MCF 10A (cell line): ENCODE measurements at regions of chr1 and their contacts with region 1.

Region 1: DNA sequence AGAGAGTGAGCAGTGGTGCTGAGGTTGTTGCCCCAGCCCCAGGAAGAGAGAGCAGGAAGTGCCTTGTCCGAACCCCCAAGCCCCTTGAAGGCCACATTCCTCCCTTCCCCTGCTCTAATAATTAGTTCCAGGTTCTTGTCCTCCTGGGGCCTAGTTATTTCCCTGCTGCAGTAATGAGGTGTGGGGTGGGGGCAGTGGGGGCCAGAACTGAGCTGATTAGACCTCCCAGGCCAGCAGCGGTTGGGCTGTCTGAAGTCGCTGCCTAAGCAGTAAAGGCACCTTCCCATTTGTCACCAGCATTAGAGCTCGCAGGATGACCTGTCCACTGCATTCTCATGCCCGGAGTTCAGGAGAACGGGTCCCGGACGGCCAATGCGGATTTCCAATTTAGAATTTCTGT is 186.5 kb upstream of the CSF3R start:
- DNase-seq: no peak
- H3K4me3 Mint-ChIP-seq: no peak overlapping the region
- H3K27ac Mint-ChIP-seq: no peak overlapping the region
- H3K4me1 Mint-ChIP-seq: no peaks in the 10 kb centered on the region
- H3K27me3 Mint-ChIP-seq: peaks cover 16% of the 10 kb centered on the region
- CTCF ChIP-seq: no peak

Region 2: DNA sequence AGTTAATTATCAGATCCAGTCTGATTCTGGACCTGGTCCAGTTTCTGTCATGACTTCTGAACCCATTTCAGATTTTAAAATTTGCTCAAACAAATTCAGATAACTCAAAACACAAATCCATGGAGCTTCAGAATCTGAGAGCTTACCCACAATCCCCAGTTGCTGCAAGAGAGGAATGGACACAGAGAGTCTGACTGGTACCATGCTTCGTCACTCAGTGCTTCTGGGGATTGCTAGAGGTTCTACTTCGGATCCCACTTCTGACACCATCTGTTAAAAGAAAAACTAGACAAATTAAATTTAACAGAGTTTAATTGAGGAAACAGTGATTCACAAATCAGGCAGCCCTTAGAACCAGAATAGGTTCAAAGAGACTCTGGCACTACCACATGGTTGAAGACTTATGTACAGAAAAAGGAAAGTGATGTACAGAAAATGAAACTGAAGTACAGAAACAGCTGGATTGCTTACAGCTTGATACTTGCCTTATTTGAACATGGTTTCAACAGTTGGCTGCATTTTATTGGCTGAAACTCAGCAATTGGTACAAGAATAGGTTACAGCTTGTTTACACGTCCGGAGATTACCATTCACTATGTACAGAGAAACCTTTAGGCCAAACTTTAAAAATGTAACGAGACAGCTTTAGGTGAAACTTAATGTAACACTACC is 646.0 kb before region 1 on chr1:
- CTCF ChIA-PET with region 1: no interaction called
- POLR2A ChIA-PET with region 1: no interaction called
- intact Hi-C with region 1: no loop called
- DNase-seq: no peak
- H3K4me3 Mint-ChIP-seq: no peak overlapping the region
- H3K27ac Mint-ChIP-seq: no peak overlapping the region
- H3K4me1 Mint-ChIP-seq: peaks cover 6% of the 10 kb centered on the region
- H3K27me3 Mint-ChIP-seq: no peaks in the 10 kb centered on the region
- CTCF ChIP-seq: no peak

Region 3: DNA sequence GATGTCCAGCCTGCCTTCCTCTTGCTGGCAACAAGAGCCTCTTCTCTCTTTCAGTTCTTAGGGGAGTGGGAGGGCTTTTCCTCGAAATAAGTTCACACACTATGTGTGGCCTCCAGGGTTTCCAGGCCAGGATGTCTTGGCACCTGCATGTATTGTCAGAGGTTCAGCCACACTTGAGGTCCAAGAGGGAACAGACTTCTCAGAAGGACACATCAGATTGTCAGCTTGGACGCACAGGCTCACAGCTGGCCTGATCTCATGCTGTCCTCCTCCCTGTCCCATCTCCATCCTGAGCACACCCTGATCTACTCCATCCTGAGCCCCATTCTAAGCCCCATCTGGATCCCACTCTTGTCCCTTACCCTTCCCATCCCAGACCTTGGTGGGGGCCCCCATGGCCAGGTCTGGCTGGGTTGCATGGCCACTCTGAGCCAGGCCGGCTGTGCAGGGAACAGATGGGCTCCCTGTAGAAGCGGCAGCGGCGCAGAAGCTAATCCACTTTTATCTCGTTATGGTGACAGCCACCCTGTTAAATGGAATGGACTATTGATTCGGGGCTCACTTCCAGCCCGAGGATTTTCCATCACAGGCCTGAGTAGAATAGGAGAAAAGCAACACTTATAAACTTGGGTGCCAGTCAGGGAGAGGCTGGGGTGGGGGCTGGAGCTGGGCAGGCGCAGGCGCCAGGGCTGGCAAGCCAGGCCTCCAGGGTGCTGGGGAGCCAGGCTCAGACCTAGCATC is 101.5 kb before region 1 on chr1:
- CTCF ChIA-PET with region 1: no interaction called
- POLR2A ChIA-PET with region 1: no interaction called
- intact Hi-C with region 1: no loop called
- DNase-seq: no peak
- H3K4me3 Mint-ChIP-seq: no peak overlapping the region
- H3K27ac Mint-ChIP-seq: no peak overlapping the region
- H3K4me1 Mint-ChIP-seq: no peaks in the 10 kb centered on the region
- H3K27me3 Mint-ChIP-seq: peaks cover 40% of the 10 kb centered on the region
- CTCF ChIP-seq: no peak

Region 4: DNA sequence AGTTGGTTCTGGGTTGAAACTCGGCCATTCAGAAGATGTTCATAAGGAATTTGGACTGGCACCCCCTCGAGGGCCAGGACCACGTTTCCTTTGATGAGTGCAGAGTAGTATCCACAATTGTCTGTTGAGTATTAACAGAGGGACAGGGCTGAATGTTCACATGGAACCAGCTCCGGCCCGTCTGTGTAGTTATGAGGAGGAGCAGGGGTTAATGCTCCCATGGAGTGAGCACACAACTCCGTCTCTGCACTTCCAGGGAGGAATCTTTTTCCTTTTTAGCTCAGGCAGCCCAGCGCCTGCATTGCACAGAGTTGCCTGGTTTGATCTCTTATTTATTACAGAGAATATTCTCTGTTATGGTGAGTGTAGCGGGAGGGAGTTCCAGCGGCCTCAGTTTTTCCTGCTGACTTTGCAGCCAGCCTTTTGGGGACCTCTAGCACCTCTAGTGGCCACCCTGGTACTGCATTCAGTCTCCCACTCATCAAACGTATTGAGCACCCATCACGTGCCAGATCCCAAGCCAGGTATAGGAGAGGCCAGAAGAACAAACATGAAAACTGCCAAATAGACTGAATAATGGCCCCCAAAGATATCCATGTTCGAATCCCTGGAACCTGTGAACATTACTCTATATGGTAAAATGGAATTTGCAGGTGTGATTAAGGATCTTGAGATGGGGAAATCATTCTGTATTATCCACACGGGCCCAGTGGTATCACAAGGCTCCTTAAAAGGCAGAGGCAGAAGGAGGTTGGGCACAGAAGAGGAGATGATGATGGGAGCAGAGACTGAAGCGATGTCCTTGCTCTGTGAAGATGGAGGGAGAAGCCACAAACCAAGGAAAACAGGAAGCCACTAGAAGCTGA is 18.8 kb before region 1 on chr1:
- CTCF ChIA-PET with region 1: interaction called, 10 read pairs
- POLR2A ChIA-PET with region 1: no interaction called
- intact Hi-C with region 1: no loop called
- DNase-seq: peak; percentile 71
- H3K4me3 Mint-ChIP-seq: no peak overlapping the region
- H3K27ac Mint-ChIP-seq: no peak overlapping the region
- H3K4me1 Mint-ChIP-seq: peaks cover 4% of the 10 kb centered on the region
- H3K27me3 Mint-ChIP-seq: peaks cover 85% of the 10 kb centered on the region
- CTCF ChIP-seq: peak; percentile 84

Region 5: DNA sequence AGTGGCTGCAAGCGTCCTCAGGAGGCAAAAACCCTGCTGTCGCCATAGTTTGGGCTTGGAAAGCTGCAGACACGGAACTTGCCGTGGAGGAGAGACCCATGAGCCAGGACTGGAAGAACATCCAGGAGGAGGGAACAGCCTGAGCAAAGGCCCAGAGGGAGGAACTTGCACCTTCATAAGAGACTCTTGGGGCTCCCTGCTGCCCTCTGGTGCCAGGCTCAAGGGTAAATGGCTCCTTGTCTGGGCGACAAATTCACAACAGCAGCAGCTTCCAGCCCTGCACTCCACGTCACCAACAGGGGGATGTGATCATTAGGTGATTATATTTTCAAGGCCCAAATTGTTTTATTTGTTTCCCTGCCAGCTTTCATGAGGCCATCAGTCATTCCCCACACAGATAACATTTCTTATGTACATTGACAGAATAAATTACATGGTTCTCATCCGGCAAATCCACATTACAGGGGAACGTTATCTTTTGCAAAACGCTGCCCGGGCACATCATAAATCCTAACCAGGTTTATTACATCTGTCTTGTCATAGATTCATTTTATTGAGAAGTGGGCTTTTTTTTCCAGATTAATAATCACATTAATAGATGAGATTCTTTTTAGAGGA is 508.1 kb after region 1 on chr1:
- CTCF ChIA-PET with region 1: no interaction called
- POLR2A ChIA-PET with region 1: no interaction called
- intact Hi-C with region 1: no loop called
- DNase-seq: peak; percentile 53
- H3K4me3 Mint-ChIP-seq: no peak overlapping the region
- H3K27ac Mint-ChIP-seq: no peak overlapping the region
- H3K4me1 Mint-ChIP-seq: no peaks in the 10 kb centered on the region
- H3K27me3 Mint-ChIP-seq: no peaks in the 10 kb centered on the region
- CTCF ChIP-seq: peak; percentile 16